PC-3 (cell line): ENCODE measurements at regions of chr3 and their contacts with region 1.

Region 1: DNA sequence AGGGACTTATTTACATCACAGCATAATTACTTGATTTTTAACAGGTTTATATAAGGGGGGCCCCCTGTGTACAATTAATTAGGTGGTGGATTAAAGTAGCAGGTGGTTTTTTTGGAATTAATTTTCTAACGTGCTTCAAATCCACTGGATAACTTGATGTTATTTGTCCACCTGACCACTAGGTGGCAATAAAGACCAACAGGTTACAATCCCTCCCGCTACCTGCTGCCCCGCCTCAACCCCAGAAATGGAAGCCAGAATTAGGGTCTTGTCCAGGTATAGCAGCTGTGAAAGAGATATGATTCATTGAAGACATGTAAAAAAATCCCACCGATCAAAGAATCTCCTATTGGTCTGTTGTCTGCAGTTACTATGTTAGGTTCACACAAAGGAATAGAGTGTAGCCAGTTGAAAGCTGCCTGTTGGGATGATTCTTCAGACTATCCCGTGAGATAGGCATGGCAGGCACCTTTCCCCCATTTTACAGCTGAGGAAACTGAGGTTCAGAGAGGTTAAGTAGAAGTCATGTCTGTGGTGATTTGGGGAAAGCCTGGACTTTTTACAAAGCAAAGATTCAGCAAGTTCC is 44.0 kb downstream of the MFSD1 start:
- DNase-seq: peak; percentile 62
- ATAC-seq: peak; percentile 50
- H3K4me3 ChIP-seq: no peak overlapping the region
- H3K27ac ChIP-seq: no peak overlapping the region
- H3K4me1 ChIP-seq: no peaks in the 10 kb centered on the region
- H3K27me3 ChIP-seq: no peaks in the 10 kb centered on the region
- CTCF ChIP-seq: peak; percentile 78

Region 2: GRCh38 chr3:158789592-158789991 is 56.3 kb before region 1 on chr3:
- CTCF ChIA-PET with region 1: no interaction called
- POLR2A ChIA-PET with region 1: no interaction called
- intact Hi-C with region 1: no loop called
- DNase-seq: peak; percentile 75
- ATAC-seq: peak; percentile 67
- H3K4me3 ChIP-seq: no peak overlapping the region
- H3K27ac ChIP-seq: peak overlapping the region; percentile 100
- H3K4me1 ChIP-seq: peaks cover 46% of the 10 kb centered on the region
- H3K27me3 ChIP-seq: no peaks in the 10 kb centered on the region
- CTCF ChIP-seq: peak; percentile 80

Region 3: DNA sequence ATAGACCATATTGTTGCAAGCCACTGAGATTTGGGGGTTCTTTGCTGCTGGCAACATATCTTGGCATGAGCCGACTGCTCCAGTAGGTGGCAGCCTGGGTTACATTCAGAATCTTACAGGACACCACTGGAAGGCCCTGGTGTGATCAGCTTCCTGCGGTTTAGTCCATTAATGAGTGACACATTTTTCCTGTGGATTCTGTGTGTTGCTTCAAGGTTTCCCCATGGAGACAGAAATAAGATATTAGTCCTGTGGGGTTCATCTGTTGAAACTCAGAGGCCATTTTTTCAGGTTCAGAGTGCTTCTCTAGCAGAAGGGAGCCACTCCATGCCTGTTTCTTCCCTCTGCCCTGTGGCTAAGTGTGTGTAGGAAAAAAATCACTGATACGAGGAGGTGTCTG is 72.2 kb after region 1 on chr3:
- CTCF ChIA-PET with region 1: no interaction called
- POLR2A ChIA-PET with region 1: no interaction called
- intact Hi-C with region 1: loop called (anchors 5 kb)
- DNase-seq: peak; percentile 68
- ATAC-seq: peak; percentile 87
- H3K4me3 ChIP-seq: no peak overlapping the region
- H3K27ac ChIP-seq: no peak overlapping the region
- H3K4me1 ChIP-seq: peaks cover 3% of the 10 kb centered on the region; the same call in 1 of the 2 replicates
- H3K27me3 ChIP-seq: no peaks in the 10 kb centered on the region
- CTCF ChIP-seq: peak; percentile 81

Region 4: DNA sequence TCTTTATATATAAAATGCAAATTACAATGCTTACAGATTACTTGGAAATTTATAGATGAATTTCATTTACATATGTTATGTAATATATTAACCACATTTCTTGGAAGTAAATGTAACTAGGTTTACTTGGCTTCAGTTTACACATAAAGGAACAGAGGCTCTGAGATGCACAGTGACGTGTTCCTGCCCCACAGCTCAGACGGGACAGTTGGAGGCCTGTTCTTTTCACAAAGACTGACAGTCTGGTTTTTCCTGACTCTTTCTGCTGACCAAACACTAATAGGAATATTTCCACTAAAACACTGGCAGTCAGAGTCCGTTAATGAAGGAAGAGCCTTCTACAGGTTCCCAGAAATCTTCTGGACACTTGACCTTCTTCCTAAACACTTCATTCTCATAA is 292.1 kb after region 1 on chr3:
- CTCF ChIA-PET with region 1: no interaction called
- POLR2A ChIA-PET with region 1: no interaction called
- intact Hi-C with region 1: loop called (anchors 5 kb)
- DNase-seq: no peak
- ATAC-seq: no peak
- H3K4me3 ChIP-seq: no peak overlapping the region
- H3K27ac ChIP-seq: no peak overlapping the region
- H3K4me1 ChIP-seq: no peaks in the 10 kb centered on the region
- H3K27me3 ChIP-seq: no peaks in the 10 kb centered on the region
- CTCF ChIP-seq: no peak

Region 5: DNA sequence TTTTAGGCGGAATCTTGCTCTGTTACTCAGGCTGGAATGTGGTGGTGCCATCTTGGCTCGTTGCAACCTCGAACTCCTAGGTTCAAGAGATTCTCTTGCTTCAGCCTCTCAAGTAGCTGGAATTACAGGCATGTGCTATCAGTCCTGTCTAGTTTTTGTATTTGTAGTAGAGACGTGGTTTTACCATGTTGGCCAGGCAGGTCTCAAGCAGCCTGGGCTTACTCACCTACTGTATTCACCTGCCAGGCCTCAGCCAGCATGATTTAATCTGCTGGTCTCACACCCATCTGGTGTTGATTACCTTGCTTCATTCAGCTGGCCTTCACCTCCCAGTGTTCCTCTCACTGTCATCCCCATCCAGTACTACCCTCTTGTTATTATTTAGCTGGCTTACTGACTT is 1244.8 kb after region 1 on chr3:
- CTCF ChIA-PET with region 1: no interaction called
- POLR2A ChIA-PET with region 1: no interaction called
- intact Hi-C with region 1: no loop called
- DNase-seq: no peak
- ATAC-seq: no peak
- H3K4me3 ChIP-seq: no peak overlapping the region
- H3K27ac ChIP-seq: no peak overlapping the region
- H3K4me1 ChIP-seq: peaks cover 4% of the 10 kb centered on the region
- H3K27me3 ChIP-seq: no peaks in the 10 kb centered on the region
- CTCF ChIP-seq: no peak